PC-9 (cell line): ENCODE measurements at regions of chr2 and their contacts with region 1.

Region 1: DNA sequence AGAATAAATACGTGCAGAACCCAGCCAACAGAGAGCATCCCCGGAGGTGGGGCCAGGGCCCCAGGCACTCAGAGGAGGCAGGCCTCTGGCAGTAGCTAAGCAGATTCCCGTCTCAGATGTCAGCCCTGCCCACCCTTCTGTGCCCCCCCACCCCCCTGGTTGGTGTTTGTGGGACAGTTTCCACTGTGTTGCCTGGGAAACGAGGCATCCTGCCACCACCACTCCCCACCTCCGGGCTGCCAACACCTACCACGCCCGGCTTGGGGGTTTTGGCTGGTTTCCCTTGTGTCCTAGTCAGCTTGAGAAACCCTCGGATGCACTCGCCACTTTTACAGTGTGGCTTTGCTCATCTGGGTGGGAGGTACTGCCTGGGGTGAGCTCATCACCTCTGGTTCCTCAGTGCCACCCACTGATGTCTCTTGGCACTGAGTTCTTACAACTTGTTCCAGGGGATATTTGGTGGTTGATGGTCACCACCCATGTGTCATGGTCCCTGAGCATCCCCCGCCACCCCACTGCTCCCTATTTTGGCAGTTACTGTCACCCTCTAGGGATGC is 72.4 kb upstream of the YWHAQ start:
- DNase-seq: peak; percentile 91 to 95
- H3K4me3 ChIP-seq: no peak overlapping the region; the same call in 1 of the 2 replicates
- H3K27ac ChIP-seq: peak overlapping the region; percentile 87
- H3K4me1 ChIP-seq: peaks cover 46% of the 10 kb centered on the region
- H3K27me3 ChIP-seq: no peaks in the 10 kb centered on the region
- CTCF ChIP-seq: no peak

Region 2: GRCh38 chr2:9519250-9519649 is 183.9 kb before region 1 on chr2:
- CTCF ChIA-PET with region 1: no interaction called
- POLR2A ChIA-PET with region 1: no interaction called
- intact Hi-C with region 1: no loop called
- DNase-seq: no peak
- H3K4me3 ChIP-seq: no peak overlapping the region
- H3K27ac ChIP-seq: no peak overlapping the region
- H3K4me1 ChIP-seq: no peaks in the 10 kb centered on the region
- H3K27me3 ChIP-seq: no peaks in the 10 kb centered on the region
- CTCF ChIP-seq: no peak

Region 3: DNA sequence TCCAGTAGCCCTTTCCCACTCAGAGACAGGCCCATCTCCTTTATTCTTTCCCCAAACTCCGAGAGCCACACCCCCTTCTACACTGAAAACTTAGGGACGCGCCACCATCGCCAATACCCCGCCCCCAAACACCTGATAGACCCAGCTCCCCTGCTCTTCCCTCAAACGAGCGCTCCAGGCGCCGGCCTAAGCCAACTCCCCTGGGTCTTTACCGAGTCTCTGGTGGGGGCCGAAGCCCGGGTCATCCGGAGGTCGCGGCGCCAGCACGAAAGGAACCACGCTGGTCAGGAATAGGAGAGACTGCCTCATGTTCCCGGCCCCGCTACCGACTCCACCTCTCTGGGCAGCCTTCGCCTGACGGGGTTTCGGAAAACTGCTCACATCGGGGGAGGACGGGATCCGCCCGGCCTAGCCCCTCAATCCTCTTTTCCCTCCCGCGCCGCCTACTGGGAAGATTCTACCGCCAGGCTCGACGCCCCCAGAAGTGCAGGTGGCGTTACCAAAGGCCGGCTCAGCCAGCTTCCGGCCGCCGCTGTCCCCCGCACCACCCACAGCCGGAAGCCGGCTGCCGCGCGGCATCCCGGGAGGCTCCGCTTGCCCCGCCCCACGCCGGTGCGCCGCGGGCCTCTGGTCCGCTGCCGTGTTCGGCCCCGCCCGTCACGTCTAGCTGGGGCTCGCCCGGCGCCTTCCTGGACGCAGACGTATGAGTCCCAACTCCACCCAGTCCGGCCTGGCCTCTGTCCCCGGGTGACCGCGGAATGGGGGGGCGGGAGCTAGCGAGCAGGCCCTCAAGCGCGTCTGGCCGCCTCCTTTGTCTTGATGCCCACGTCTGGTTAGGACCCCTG is 147.6 kb before region 1 on chr2 and contains the start of gene ADAM17:
- CTCF ChIA-PET with region 1: no interaction called
- POLR2A ChIA-PET with region 1: interaction called, 5 read pairs
- intact Hi-C with region 1: loop called (anchors 1 kb)
- DNase-seq: peak; percentile 90 to 96
- H3K4me3 ChIP-seq: peak within 1 kb of the TSS; percentile 83
- H3K27ac ChIP-seq: peak within 1 kb of the TSS; percentile 96
- H3K4me1 ChIP-seq: peaks cover 74% of the 10 kb centered on the region
- H3K27me3 ChIP-seq: no peaks in the 10 kb centered on the region
- CTCF ChIP-seq: peak; percentile 35; the same call in 1 of the 2 replicates
- total RNA-seq, gene ADAM17: 53.5 and 65.0 TPM in 2 replicates

Region 4: GRCh38 chr2:9630749-9631483 is 72.2 kb before region 1 on chr2 and contains the start of gene YWHAQ:
- CTCF ChIA-PET with region 1: interaction called, 8 read pairs
- POLR2A ChIA-PET with region 1: interaction called, 9 read pairs
- intact Hi-C with region 1: loop called (anchors 2 kb)
- DNase-seq: peak; percentile 93 to 98
- H3K4me3 ChIP-seq: peak within 1 kb of the TSS; percentile 91
- H3K27ac ChIP-seq: peak within 1 kb of the TSS; percentile 72
- H3K4me1 ChIP-seq: peaks cover 36% of the 10 kb centered on the region
- H3K27me3 ChIP-seq: no peaks in the 10 kb centered on the region
- CTCF ChIP-seq: no peak
- total RNA-seq, gene YWHAQ: 353 and 373 TPM in 2 replicates

Region 5: GRCh38 chr2:9644603-9645002 is 58.6 kb before region 1 on chr2:
- CTCF ChIA-PET with region 1: no interaction called
- POLR2A ChIA-PET with region 1: no interaction called
- intact Hi-C with region 1: loop called (anchors 2 kb)
- DNase-seq: peak; percentile 63 to 99
- H3K4me3 ChIP-seq: no peak overlapping the region
- H3K27ac ChIP-seq: peak overlapping the region; percentile 65
- H3K4me1 ChIP-seq: peaks cover 20% of the 10 kb centered on the region
- H3K27me3 ChIP-seq: no peaks in the 10 kb centered on the region
- CTCF ChIP-seq: no peak

Region 6: GRCh38 chr2:9675415-9676351 is 27.5 kb before region 1 on chr2:
- CTCF ChIA-PET with region 1: no interaction called
- POLR2A ChIA-PET with region 1: no interaction called
- intact Hi-C with region 1: loop called (anchors 1 kb)
- DNase-seq: peak; percentile 29 to 98
- H3K4me3 ChIP-seq: peak overlapping the region; percentile 40; the same call in 1 of the 2 replicates
- H3K27ac ChIP-seq: peak overlapping the region; percentile 60
- H3K4me1 ChIP-seq: peaks cover 23% of the 10 kb centered on the region
- H3K27me3 ChIP-seq: no peaks in the 10 kb centered on the region
- CTCF ChIP-seq: no peak

Region 7: GRCh38 chr2:9720352-9721093 is 17.4 kb after region 1 on chr2:
- CTCF ChIA-PET with region 1: no interaction called
- POLR2A ChIA-PET with region 1: no interaction called
- intact Hi-C with region 1: no loop called
- DNase-seq: no peak
- H3K4me3 ChIP-seq: no peak overlapping the region
- H3K27ac ChIP-seq: no peak overlapping the region
- H3K4me1 ChIP-seq: no peaks in the 10 kb centered on the region
- H3K27me3 ChIP-seq: no peaks in the 10 kb centered on the region
- CTCF ChIP-seq: no peak